Caco-2 (cell line): ENCODE measurements at regions of chr5 and their contacts with region 1.

Region 1: GRCh38 chr5:53170748-53171349 is 61.3 kb upstream of the MOCS2 start:
- DNase-seq: peak in 1 of 2 experiments; percentile 32
- H3K4me3 ChIP-seq: no peak overlapping the region
- H3K4me3 Mint-ChIP-seq: no peak overlapping the region
- H3K27ac Mint-ChIP-seq: no peak overlapping the region
- H3K4me1 ChIP-seq: no peaks in the 10 kb centered on the region
- H3K4me1 Mint-ChIP-seq: no peaks in the 10 kb centered on the region
- H3K27me3 ChIP-seq: no peaks in the 10 kb centered on the region
- H3K27me3 Mint-ChIP-seq: peaks cover 6% of the 10 kb centered on the region
- CTCF ChIP-seq: peak; percentile 59 to 64

Region 2: GRCh38 chr5:53291047-53291927 is 120.4 kb after region 1 on chr5:
- CTCF ChIA-PET with region 1: no interaction called
- POLR2A ChIA-PET with region 1: no interaction called
- intact Hi-C with region 1: loop called (anchors 5 kb)
- DNase-seq: no peak
- H3K4me3 ChIP-seq: no peak overlapping the region
- H3K4me3 Mint-ChIP-seq: no peak overlapping the region
- H3K27ac Mint-ChIP-seq: no peak overlapping the region
- H3K4me1 ChIP-seq: no peaks in the 10 kb centered on the region
- H3K4me1 Mint-ChIP-seq: peaks cover 6% of the 10 kb centered on the region
- H3K27me3 ChIP-seq: no peaks in the 10 kb centered on the region
- H3K27me3 Mint-ChIP-seq: peaks cover 6% of the 10 kb centered on the region
- CTCF ChIP-seq: no peak

Region 3: GRCh38 chr5:53335115-53335514 is 164.3 kb after region 1 on chr5:
- CTCF ChIA-PET with region 1: interaction called, 4 read pairs
- POLR2A ChIA-PET with region 1: no interaction called
- intact Hi-C with region 1: loop called (anchors 1 kb)
- DNase-seq: peak; percentile 39 to 48
- H3K4me3 ChIP-seq: no peak overlapping the region
- H3K4me3 Mint-ChIP-seq: no peak overlapping the region
- H3K27ac Mint-ChIP-seq: no peak overlapping the region
- H3K4me1 ChIP-seq: no peaks in the 10 kb centered on the region
- H3K4me1 Mint-ChIP-seq: no peaks in the 10 kb centered on the region
- H3K27me3 ChIP-seq: no peaks in the 10 kb centered on the region
- H3K27me3 Mint-ChIP-seq: peaks cover 3% of the 10 kb centered on the region
- CTCF ChIP-seq: peak; percentile 41 to 70

Region 4: DNA sequence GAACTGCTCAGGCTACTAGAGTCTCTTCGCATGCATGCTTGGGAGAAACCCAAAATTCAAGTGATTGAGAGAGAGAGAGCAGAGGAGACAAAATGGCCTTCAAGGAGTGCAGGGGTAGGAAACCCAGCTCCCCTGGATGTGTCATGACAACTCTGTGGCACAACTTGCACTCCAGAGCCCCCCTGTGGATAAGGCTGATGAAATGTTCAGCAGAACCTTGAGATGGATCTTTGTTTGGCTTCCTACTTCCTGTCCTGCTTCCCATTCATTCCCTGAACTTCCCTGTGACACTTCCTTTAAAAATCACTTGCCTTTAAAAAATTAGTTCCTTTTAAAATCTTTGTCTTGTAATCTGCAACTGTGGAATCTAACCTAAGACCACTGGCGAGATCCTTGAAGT is 180.5 kb after region 1 on chr5:
- CTCF ChIA-PET with region 1: no interaction called
- POLR2A ChIA-PET with region 1: no interaction called
- intact Hi-C with region 1: loop called (anchors 1 kb)
- DNase-seq: peak in 1 of 2 experiments; percentile 4
- H3K4me3 ChIP-seq: no peak overlapping the region
- H3K4me3 Mint-ChIP-seq: no peak overlapping the region
- H3K27ac Mint-ChIP-seq: no peak overlapping the region
- H3K4me1 ChIP-seq: 0 out of 2 replicates have a peak, but pooled peaks cover 6% of the 10 kb centered on the region
- H3K4me1 Mint-ChIP-seq: peaks cover 7% of the 10 kb centered on the region
- H3K27me3 ChIP-seq: no peaks in the 10 kb centered on the region
- H3K27me3 Mint-ChIP-seq: peaks cover 5% of the 10 kb centered on the region
- CTCF ChIP-seq: peak in 1 of 2 experiments; percentile 13

Region 5: DNA sequence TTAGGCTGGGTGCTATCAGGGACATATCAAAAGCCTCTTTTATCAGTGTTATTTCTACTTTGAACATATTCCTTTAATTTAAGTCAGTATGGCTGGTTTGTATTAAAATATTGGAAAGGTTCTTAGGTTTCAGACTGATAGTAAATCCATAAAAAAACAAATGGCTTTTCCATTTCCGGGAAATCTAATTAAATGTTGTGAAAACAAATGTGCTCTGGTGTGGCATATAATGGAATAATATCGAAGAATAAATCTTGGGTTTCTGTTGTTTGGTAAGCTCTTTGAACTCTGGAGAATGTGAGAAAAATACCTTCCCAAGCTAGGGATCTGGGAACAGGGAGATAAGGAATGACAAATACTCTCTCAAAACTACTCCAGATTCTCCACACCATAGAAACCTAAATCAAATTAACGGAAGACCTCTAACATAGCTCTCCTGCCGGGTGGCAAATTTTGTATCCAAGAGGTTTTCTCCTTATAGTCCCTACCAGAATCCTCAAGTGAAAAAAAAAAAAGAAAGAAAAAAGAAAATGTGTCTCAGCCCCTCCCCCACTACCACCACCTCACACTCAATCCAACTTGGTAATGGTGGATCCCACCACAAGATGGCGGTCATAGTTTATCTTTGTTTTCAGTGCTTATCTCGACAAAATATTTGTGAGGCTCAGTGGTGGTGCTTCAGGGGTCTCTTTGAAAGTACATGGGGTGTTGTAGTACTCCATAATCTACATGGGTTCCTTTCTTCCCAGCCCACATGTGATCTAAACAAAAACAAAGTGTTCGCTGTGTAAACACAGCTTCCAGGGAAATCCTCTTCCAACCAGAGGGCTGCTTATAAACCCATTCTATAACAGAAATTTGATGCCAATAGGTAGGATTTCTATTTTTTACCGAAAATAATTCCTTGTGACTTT is 255.0 kb after region 1 on chr5:
- CTCF ChIA-PET with region 1: interaction called, 7 read pairs
- POLR2A ChIA-PET with region 1: no interaction called
- intact Hi-C with region 1: loop called (anchors 1 kb)
- DNase-seq: peak; percentile 47 to 54
- H3K4me3 ChIP-seq: no peak overlapping the region
- H3K4me3 Mint-ChIP-seq: no peak overlapping the region
- H3K27ac Mint-ChIP-seq: no peak overlapping the region
- H3K4me1 ChIP-seq: peaks cover 8% of the 10 kb centered on the region; the same call in 1 of the 2 replicates
- H3K4me1 Mint-ChIP-seq: peaks cover 23% of the 10 kb centered on the region
- H3K27me3 ChIP-seq: no peaks in the 10 kb centered on the region
- H3K27me3 Mint-ChIP-seq: peaks cover 12% of the 10 kb centered on the region
- CTCF ChIP-seq: peak; percentile 29 to 45

Region 6: GRCh38 chr5:54229041-54229780 is 1058.4 kb after region 1 on chr5:
- CTCF ChIA-PET with region 1: no interaction called
- POLR2A ChIA-PET with region 1: no interaction called
- intact Hi-C with region 1: loop called (anchors 5 kb)
- DNase-seq: peak; percentile 57 to 76
- H3K4me3 ChIP-seq: no peak overlapping the region
- H3K4me3 Mint-ChIP-seq: no peak overlapping the region
- H3K27ac Mint-ChIP-seq: no peak overlapping the region
- H3K4me1 ChIP-seq: no peaks in the 10 kb centered on the region
- H3K4me1 Mint-ChIP-seq: peaks cover 6% of the 10 kb centered on the region
- H3K27me3 ChIP-seq: no peaks in the 10 kb centered on the region
- H3K27me3 Mint-ChIP-seq: no peaks in the 10 kb centered on the region
- CTCF ChIP-seq: peak; percentile 89 to 93